K562 (cell line): ENCODE measurements at regions of chr5 and their contacts with region 1.

Region 1: DNA sequence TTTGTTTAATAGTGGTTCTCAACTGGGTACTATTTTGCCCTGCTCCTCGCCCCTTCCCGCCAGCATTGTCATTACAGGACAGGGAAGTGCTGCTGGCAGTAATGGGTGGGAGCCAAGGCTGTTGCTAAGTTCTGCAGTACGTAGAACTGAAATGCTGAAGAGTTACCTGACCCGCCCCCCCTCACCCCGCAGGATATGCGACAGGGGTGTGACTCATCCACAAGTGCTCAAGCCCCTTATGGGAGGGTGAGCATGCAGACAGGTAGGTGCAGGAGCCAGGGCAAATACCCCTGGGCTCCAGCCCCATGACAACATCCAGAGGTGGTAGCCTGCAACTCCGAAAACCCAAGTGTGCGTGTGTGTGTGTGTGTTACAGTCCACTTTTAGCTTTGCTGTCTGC is 35.7 kb downstream of the LRRC70 start:
- DNase-seq: no peak
- ATAC-seq: no peak
- H3K4me3 ChIP-seq: no peak overlapping the region
- H3K27ac ChIP-seq: no peak overlapping the region
- H3K4me1 ChIP-seq: no peaks in the 10 kb centered on the region
- H3K27me3 ChIP-seq: no peaks in the 10 kb centered on the region
- CTCF ChIP-seq: no peak
- EP300 ChIP-seq: no peak
- POLR2A ChIP-seq: no peak
- RAD21 ChIP-seq: no peak

Region 2: DNA sequence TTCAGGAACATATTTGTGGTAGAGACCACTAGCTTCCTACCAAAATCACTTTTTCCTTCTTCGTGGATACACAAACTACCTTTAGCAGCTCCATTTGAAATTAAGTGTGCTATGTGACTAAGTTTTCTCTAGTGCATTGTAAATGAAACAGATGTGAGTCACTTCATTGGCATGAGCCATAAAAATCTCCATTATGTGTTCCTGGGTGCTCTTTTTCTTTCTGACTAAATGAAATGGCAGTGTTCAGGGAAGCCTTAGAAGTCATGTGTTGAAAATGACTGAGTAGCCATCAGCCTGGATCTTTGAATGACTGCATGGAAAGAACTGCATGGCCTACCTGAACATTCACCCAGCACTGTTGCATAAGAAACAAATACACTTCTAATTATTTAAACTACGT is 1561.5 kb before region 1 on chr5:
- CTCF ChIA-PET with region 1: no interaction called
- POLR2A ChIA-PET with region 1: no interaction called
- in situ Hi-C with region 1: no loop called
- intact Hi-C with region 1: no loop called
- DNase-seq: no peak
- ATAC-seq: no peak
- H3K4me3 ChIP-seq: no peak overlapping the region
- H3K27ac ChIP-seq: no peak overlapping the region
- H3K4me1 ChIP-seq: no peaks in the 10 kb centered on the region
- H3K27me3 ChIP-seq: no peaks in the 10 kb centered on the region
- CTCF ChIP-seq: no peak
- EP300 ChIP-seq: no peak
- POLR2A ChIP-seq: no peak
- RAD21 ChIP-seq: no peak

Region 3: GRCh38 chr5:62550103-62550502 is 64.3 kb before region 1 on chr5:
- CTCF ChIA-PET with region 1: no interaction called
- POLR2A ChIA-PET with region 1: no interaction called
- in situ Hi-C with region 1: no loop called
- intact Hi-C with region 1: loop called (anchors 10 kb)
- DNase-seq: no peak
- ATAC-seq: no peak
- H3K4me3 ChIP-seq: no peak overlapping the region
- H3K27ac ChIP-seq: no peak overlapping the region
- H3K4me1 ChIP-seq: no peaks in the 10 kb centered on the region
- H3K27me3 ChIP-seq: no peaks in the 10 kb centered on the region
- CTCF ChIP-seq: no peak
- EP300 ChIP-seq: no peak
- POLR2A ChIP-seq: no peak
- RAD21 ChIP-seq: no peak

Region 4: DNA sequence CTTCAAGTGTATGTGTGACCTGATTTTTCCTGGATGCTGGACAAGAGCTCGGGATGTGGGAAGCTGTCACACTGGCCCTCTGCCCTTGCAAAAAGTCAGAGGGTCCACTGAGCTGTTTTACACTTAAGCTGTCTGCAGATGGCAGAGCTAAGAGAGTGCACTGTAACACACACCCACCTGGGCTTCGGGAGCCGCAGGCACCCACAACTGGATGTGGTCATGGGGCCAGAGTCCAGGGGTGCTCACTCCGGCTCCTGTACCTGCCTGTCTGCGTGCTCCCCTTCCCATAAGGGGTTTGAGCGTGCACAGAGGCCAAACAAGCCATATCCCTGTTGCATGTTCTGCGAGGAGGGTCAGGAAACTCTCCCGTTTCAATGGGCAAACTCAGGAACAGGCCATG is 46.8 kb after region 1 on chr5:
- CTCF ChIA-PET with region 1: no interaction called
- POLR2A ChIA-PET with region 1: no interaction called
- in situ Hi-C with region 1: no loop called
- intact Hi-C with region 1: no loop called
- DNase-seq: no peak
- ATAC-seq: peak; percentile 60
- H3K4me3 ChIP-seq: no peak overlapping the region
- H3K27ac ChIP-seq: no peak overlapping the region
- H3K4me1 ChIP-seq: no peaks in the 10 kb centered on the region
- H3K27me3 ChIP-seq: peaks cover 0 to 3% of the 10 kb centered on the region in 2 experiments; a peak in 1 of 5 replicates
- CTCF ChIP-seq: no peak
- EP300 ChIP-seq: no peak
- POLR2A ChIP-seq: no peak
- RAD21 ChIP-seq: no peak